ENCODE measurements at regions of chr4 and their contacts with region 1.

Region 1: DNA sequence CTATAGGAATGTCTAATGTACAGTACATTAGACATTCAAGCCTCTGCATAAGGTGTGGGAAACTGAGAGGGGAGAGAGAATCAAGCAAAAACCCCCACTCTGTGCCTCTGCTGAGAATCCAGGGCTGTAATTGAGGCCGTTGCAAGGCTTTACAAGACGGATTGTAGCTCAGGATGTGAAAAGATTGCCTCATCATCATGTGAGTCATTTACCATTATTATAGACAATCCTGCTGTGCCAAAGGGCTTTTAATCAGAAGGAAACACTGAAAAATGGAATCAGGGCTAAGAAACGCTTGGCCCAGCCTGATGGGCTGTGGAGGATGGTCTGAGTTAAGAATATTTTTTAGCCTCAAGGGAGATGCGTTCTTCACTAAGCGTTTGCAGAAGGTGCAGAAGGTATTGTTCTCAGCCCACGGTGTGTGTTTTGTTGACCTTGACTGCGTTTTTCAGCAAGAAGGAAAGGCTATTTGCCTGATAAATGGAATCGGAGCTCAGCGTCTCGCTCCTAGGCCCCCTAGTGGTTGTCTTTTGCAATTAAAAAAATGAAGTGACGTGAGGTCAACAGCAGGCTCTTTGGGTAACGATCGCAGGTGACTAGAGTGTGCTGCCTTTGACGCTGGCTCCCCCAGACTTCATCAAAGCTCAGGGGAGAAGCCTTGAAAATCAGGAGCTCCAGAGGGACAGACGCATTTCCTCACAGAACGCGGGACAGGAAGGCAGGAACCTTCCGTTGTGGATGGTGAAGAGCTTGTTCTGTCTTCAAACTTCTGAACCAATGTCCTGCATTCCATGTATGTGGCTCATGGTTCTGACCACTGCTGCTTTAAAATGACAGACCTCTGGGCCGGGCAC is 18.1 kb upstream of the CHRNA9 start:
- DNase-seq: peak; percentile 82
- ATAC-seq: peak; percentile 78
- H3K4me3 Mint-ChIP-seq: peak overlapping the region; percentile 78
- H3K27ac Mint-ChIP-seq: peak overlapping the region; percentile 97
- H3K4me1 Mint-ChIP-seq: peaks cover 39% of the 10 kb centered on the region
- H3K27me3 Mint-ChIP-seq: no peaks in the 10 kb centered on the region

Region 2: GRCh38 chr4:40149960-40150385 is 167.0 kb before region 1 on chr4:
- CTCF ChIA-PET with region 1: interaction called, 11 read pairs
- DNase-seq: peak; percentile 82
- ATAC-seq: peak; percentile 88
- H3K4me3 Mint-ChIP-seq: no peak overlapping the region
- H3K27ac Mint-ChIP-seq: peak overlapping the region; percentile 42
- H3K4me1 Mint-ChIP-seq: peaks cover 17% of the 10 kb centered on the region
- H3K27me3 Mint-ChIP-seq: no peaks in the 10 kb centered on the region

Region 3: DNA sequence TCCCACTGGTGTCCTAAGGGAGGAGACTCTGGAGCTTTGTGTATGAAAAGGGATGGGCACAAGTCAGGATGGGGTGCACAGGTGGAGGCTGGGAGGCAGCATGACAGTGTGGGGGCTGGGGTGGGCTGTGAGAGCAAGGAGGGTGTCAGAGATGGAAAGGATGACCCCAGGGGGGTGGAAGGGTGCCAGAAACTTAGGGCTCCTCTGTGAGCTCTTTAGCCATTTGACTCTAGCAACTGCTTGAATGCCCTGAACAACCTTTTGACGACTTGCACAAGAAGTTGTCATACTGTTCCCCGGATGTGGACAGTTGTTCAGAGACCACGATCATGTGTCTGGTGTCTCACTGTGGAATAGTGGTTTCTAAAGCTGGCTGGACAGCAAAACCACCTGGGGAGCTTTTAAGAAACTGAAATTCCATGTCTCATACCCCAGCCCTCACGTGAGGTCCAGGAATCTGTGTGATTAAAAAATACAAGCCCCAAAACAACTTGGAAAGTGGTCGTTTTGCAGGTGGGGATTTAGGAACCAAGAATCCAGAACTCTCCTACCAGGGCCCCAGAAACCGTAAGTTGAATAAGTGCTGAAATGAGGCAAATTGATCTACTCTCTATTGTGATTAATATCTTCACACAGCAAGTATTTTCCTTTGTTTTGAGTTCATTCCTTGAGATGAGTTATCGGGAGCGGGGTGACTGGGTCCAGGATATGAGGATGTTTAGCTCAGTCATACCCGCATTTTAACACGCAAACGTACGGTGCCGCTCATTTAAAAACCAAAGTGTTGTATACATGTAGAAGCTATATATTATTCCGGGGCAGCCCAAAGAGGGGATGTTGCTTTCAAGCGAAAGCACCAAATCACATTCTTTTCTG is 116.8 kb before region 1 on chr4:
- CTCF ChIA-PET with region 1: interaction called, 18 read pairs
- DNase-seq: peak; percentile 94
- ATAC-seq: peak; percentile 52
- H3K4me3 Mint-ChIP-seq: peak overlapping the region; percentile 98
- H3K27ac Mint-ChIP-seq: peak overlapping the region; percentile 99
- H3K4me1 Mint-ChIP-seq: peaks cover 51% of the 10 kb centered on the region
- H3K27me3 Mint-ChIP-seq: no peaks in the 10 kb centered on the region

Region 4: GRCh38 chr4:40212674-40213527 is 104.1 kb before region 1 on chr4:
- CTCF ChIA-PET with region 1: interaction called, 12 read pairs
- DNase-seq: peak; percentile 45
- ATAC-seq: peak; percentile 22
- H3K4me3 Mint-ChIP-seq: peak overlapping the region; percentile 75
- H3K27ac Mint-ChIP-seq: peak overlapping the region; percentile 89
- H3K4me1 Mint-ChIP-seq: peaks cover 85% of the 10 kb centered on the region
- H3K27me3 Mint-ChIP-seq: no peaks in the 10 kb centered on the region

Region 5: GRCh38 chr4:40238008-40238699 is 78.9 kb before region 1 on chr4:
- CTCF ChIA-PET with region 1: interaction called, 14 read pairs
- DNase-seq: peak; percentile 65
- ATAC-seq: peak; percentile 16
- H3K4me3 Mint-ChIP-seq: peak overlapping the region; percentile 82
- H3K27ac Mint-ChIP-seq: peak overlapping the region; percentile 99
- H3K4me1 Mint-ChIP-seq: peaks cover 90% of the 10 kb centered on the region
- H3K27me3 Mint-ChIP-seq: no peaks in the 10 kb centered on the region

Measured in activated CD8-positive, alpha-beta memory T cell treated with anti-CD3 and anti-CD28 coated beads, Interleukin-2, amount 10 ng/mL, durations not matched to agents 7 days and 5 days (primary cell).